ENCODE measurements at regions of chr17 and their contacts with region 1.

Region 1: GRCh38 chr17:74659898-74660297 is 36.4 kb upstream of the CD300E start:
- DNase-seq: no peak
- ATAC-seq: no peak
- H3K4me3 ChIP-seq: no peak overlapping the region
- H3K4me3 Mint-ChIP-seq: no peak overlapping the region
- H3K27ac ChIP-seq: no peak overlapping the region
- H3K27ac Mint-ChIP-seq: peak overlapping the region in 1 of 9 donors; percentile 32
- H3K4me1 ChIP-seq: peaks cover 0 to 3% of the 10 kb centered on the region in 2 donors
- H3K4me1 Mint-ChIP-seq: peaks cover 4 to 9% (median 6%) of the 10 kb centered on the region in 7 donors
- H3K27me3 ChIP-seq: peaks cover 0 to 3% of the 10 kb centered on the region in 2 donors
- H3K27me3 Mint-ChIP-seq: peaks cover 29 to 78% (median 36%) of the 10 kb centered on the region in 5 donors

Region 2: GRCh38 chr17:74245145-74245831 is 414.6 kb before region 1 on chr17:
- CTCF ChIA-PET with region 1: no interaction called
- POLR2A ChIA-PET with region 1: no interaction called
- intact Hi-C with region 1: no loop called
- DNase-seq: no peak
- ATAC-seq: no peak
- H3K4me3 ChIP-seq: no peak overlapping the region
- H3K4me3 Mint-ChIP-seq: no peak overlapping the region
- H3K27ac ChIP-seq: no peak overlapping the region
- H3K27ac Mint-ChIP-seq: no peak overlapping the region
- H3K4me1 ChIP-seq: no peaks in the 10 kb centered on the region
- H3K4me1 Mint-ChIP-seq: peaks cover 0 to 6% (median 0%) of the 10 kb centered on the region in 7 donors
- H3K27me3 ChIP-seq: no peaks in the 10 kb centered on the region
- H3K27me3 Mint-ChIP-seq: no peaks in the 10 kb centered on the region

Region 3: GRCh38 chr17:74569020-74570003 is 90.6 kb before region 1 on chr17:
- CTCF ChIA-PET with region 1: no interaction called
- POLR2A ChIA-PET with region 1: no interaction called
- intact Hi-C with region 1: no loop called
- DNase-seq: no peak
- ATAC-seq: peak; percentile 90
- H3K4me3 ChIP-seq: no peak overlapping the region
- H3K4me3 Mint-ChIP-seq: no peak overlapping the region
- H3K27ac ChIP-seq: no peak overlapping the region
- H3K27ac Mint-ChIP-seq: no peak overlapping the region
- H3K4me1 ChIP-seq: no peaks in the 10 kb centered on the region
- H3K4me1 Mint-ChIP-seq: peaks cover 0 to 13% (median 8%) of the 10 kb centered on the region in 7 donors
- H3K27me3 ChIP-seq: no peaks in the 10 kb centered on the region
- H3K27me3 Mint-ChIP-seq: peaks cover 19 to 35% (median 30%) of the 10 kb centered on the region in 5 donors

Region 4: DNA sequence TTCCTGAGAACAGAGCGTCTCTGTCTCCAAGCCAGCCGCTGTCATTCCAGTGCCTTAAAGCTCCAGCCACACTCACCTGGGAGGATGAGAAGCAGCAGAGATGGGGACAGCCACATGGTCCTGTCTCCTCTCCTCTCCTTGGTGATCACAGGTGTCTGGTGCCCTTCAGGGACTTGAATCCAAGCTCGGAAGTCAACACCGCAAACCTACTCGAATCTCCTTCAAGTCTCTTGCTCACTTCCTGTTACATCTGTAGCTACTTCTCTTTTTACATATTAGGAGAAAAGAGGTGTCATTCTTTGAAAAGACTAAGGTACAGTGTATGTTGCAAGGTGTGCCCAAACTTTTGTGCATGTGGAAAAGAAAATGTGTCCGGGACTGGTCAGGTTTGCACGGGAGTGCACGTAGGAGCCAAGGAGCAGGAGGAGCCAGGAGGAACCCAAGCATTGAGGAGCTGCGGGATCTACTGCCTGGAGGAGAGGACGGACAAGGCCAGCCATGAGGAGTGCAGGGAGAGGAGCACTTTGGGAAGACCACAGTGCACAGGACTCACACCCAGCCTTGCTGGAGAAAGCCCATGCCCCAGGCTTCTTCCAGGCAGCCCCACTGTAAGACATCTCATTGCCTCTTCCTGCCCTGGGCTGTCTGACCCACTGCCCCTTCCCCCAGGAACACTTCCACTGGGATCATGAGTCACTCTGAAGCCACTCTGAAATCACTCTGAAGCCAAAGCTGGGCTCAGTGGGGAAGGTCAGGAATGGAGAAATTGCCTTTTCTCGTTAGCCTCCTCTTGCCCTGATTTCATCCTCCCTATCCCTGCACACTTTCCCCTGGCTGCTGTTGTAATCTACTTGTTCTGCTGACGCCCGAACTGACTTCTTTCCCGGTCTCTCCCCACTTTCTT is 67.6 kb before region 1 on chr17 and contains the start of gene CD300LD:
- CTCF ChIA-PET with region 1: no interaction called
- POLR2A ChIA-PET with region 1: no interaction called
- intact Hi-C with region 1: no loop called
- DNase-seq: peak in 5 of 9 donors; percentile 17 to 42 (median 31)
- ATAC-seq: peak; percentile 54
- H3K4me3 ChIP-seq: no peak within 1 kb of the TSS
- H3K4me3 Mint-ChIP-seq: peak within 1 kb of the TSS; percentile 21 to 76 (median 58)
- H3K27ac ChIP-seq: no peak within 1 kb of the TSS
- H3K27ac Mint-ChIP-seq: peak within 1 kb of the TSS in 8 of 9 donors; percentile 33 to 77 (median 70)
- H3K4me1 ChIP-seq: peaks cover 0 to 14% of the 10 kb centered on the region in 2 donors
- H3K4me1 Mint-ChIP-seq: peaks cover 8 to 20% (median 18%) of the 10 kb centered on the region in 7 donors
- H3K27me3 ChIP-seq: peaks cover 0 to 4% of the 10 kb centered on the region in 2 donors
- H3K27me3 Mint-ChIP-seq: peaks cover 0 to 27% (median 5%) of the 10 kb centered on the region in 5 donors
- total RNA-seq, gene CD300LD: 0.39 TPM in 1 of 5 experiments, not detected in the others

Region 5: GRCh38 chr17:74759243-74759801 is 99.4 kb after region 1 on chr17:
- CTCF ChIA-PET with region 1: interaction called, 34 read pairs
- POLR2A ChIA-PET with region 1: no interaction called
- intact Hi-C with region 1: loop called in 1 of 2 experiments (anchors 5 kb)
- DNase-seq: peak in 6 of 9 donors; percentile 47 to 60 (median 56)
- ATAC-seq: peak; percentile 86
- H3K4me3 ChIP-seq: peak overlapping the region; percentile 60
- H3K4me3 Mint-ChIP-seq: peak overlapping the region; percentile 82 to 92 (median 84)
- H3K27ac ChIP-seq: peak overlapping the region; percentile 49
- H3K27ac Mint-ChIP-seq: peak overlapping the region; percentile 75 to 97 (median 90)
- H3K4me1 ChIP-seq: peaks cover 69 to 82% of the 10 kb centered on the region in 2 donors
- H3K4me1 Mint-ChIP-seq: peaks cover 44 to 78% (median 62%) of the 10 kb centered on the region in 7 donors
- H3K27me3 ChIP-seq: no peaks in the 10 kb centered on the region
- H3K27me3 Mint-ChIP-seq: no peaks in the 10 kb centered on the region

Region 6: DNA sequence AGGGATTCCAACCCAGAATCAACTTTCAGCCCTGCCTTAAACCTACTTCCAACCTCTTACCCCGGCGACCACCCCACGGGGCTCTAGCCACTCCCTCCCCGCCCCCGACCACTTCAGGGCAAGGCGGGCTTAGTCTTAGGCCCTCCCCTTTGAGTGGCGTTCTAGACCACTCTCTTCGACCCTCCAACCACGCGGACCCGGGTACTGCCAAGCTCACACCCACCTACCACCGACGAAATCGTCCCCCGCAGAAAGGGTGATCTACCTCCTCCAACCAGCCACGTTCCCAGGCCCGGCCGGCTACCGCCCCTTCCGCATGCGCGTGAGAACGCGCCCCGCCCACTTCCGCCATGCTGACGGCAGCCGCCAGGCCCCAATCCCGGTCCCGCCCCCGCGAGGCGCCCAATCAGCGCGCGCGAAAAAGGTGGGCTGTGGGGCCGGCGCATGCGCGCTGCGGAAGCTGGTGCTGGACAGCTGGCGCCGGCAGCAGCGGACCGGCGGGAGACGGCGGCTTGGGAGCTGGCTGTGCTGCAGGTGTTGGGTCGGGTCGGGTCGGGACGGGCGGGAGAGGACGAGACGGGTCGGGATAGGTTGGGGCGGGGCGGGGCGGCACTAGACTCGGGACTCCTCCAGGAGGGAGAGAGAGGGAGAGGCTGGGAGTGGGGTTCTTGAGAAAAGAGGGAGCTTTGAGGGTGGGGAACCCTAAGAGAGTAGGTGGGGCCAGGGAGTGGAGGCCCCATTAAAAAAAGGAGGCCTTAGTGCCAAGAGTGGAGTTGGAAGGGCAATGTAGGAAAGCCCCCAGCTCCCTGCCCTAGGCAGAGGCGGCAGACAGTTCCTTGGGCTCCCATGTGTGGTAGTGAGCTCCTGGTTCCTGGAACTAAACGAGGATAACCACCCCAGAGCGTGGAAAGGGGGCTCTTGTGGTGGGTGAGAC is 116.4 kb after region 1 on chr17 and contains the start of gene NAT9:
- CTCF ChIA-PET with region 1: interaction called, 74 read pairs
- POLR2A ChIA-PET with region 1: interaction called, 3 read pairs
- intact Hi-C with region 1: no loop called
- DNase-seq: peak; percentile 95 to 100 (median 98)
- ATAC-seq: peak; percentile 86
- H3K4me3 ChIP-seq: peak within 1 kb of the TSS; percentile 91
- H3K4me3 Mint-ChIP-seq: peak within 1 kb of the TSS; percentile 96 to 100 (median 98)
- H3K27ac ChIP-seq: peak within 1 kb of the TSS; percentile 78
- H3K27ac Mint-ChIP-seq: peak within 1 kb of the TSS; percentile 91 to 99 (median 96)
- H3K4me1 ChIP-seq: peaks cover 49 to 51% of the 10 kb centered on the region in 2 donors
- H3K4me1 Mint-ChIP-seq: peaks cover 32 to 76% (median 66%) of the 10 kb centered on the region in 7 donors
- H3K27me3 ChIP-seq: no peaks in the 10 kb centered on the region
- H3K27me3 Mint-ChIP-seq: no peaks in the 10 kb centered on the region
- total RNA-seq, gene NAT9: 41.4 to 78.8 (median 56.9) TPM

Region 7: GRCh38 chr17:74814453-74814852 is 154.6 kb after region 1 on chr17:
- CTCF ChIA-PET with region 1: interaction called, 4 read pairs
- POLR2A ChIA-PET with region 1: no interaction called
- intact Hi-C with region 1: loop called in 1 of 2 experiments (anchors 1 kb)
- DNase-seq: peak in 2 of 9 donors; percentile 7 to 9
- ATAC-seq: no peak
- H3K4me3 ChIP-seq: no peak overlapping the region
- H3K4me3 Mint-ChIP-seq: no peak overlapping the region
- H3K27ac ChIP-seq: no peak overlapping the region
- H3K27ac Mint-ChIP-seq: no peak overlapping the region
- H3K4me1 ChIP-seq: no peaks in the 10 kb centered on the region
- H3K4me1 Mint-ChIP-seq: peaks cover 0 to 16% (median 0%) of the 10 kb centered on the region in 7 donors
- H3K27me3 ChIP-seq: no peaks in the 10 kb centered on the region
- H3K27me3 Mint-ChIP-seq: no peaks in the 10 kb centered on the region

Region 8: DNA sequence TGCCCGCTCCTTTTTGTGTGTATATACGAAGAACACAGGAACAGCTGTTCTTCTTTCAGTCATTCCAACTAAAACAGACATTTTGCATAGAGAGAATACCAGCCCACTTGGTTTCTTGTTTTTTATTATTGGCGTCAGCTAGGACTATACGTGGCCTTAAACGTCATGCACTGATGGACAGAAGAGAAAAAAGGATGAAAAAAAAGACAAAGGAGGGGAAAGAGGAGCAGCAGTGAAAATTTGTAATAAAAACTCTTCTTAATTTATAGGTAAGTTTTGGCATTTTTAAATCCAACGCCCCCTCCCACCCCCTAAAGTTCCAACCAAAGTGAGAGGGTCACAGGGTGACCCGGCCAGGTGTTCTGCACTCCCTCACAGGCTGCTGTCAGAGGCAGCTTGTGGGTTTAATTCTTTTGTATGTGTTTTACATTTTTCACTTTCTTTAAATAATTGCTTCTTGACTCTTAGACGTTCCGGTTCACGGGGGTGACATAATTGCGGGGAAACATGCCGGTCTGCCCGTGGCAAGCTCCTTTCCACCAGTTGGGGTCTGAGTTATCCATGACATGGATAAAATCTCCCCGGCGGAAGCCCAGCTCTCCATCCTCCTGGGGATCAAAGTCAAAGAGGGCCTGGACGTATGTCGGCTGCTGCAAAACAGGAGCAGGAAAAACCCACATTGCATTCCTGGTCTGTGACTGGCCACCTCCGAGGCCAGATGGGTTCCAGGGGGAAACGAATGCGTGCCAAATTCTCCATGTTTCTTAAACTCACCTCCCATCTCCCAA is 660.2 kb after region 1 on chr17:
- CTCF ChIA-PET with region 1: no interaction called
- POLR2A ChIA-PET with region 1: no interaction called
- intact Hi-C with region 1: no loop called
- DNase-seq: no peak
- ATAC-seq: no peak
- H3K4me3 ChIP-seq: no peak overlapping the region
- H3K4me3 Mint-ChIP-seq: no peak overlapping the region
- H3K27ac ChIP-seq: no peak overlapping the region
- H3K27ac Mint-ChIP-seq: peak overlapping the region in 3 of 9 donors; percentile 13 to 51 (median 48)
- H3K4me1 ChIP-seq: peaks cover 4% of the 10 kb centered on the region in 2 donors
- H3K4me1 Mint-ChIP-seq: peaks cover 0 to 20% (median 9%) of the 10 kb centered on the region in 7 donors
- H3K27me3 ChIP-seq: no peaks in the 10 kb centered on the region
- H3K27me3 Mint-ChIP-seq: no peaks in the 10 kb centered on the region